ENCODE measurements at regions of chr18 and their contacts with region 1.

Region 1: GRCh38 chr18:3995476-3996102 is 459.5 kb downstream of the DLGAP1 start:
- DNase-seq: peak in 1 of 2 donors; percentile 71
- H3K4me3 ChIP-seq: peak overlapping the region; percentile 23 to 47
- H3K27ac ChIP-seq: no peak overlapping the region
- H3K4me1 ChIP-seq: no peaks in the 10 kb centered on the region
- H3K27me3 ChIP-seq: no peaks in the 10 kb centered on the region
- CTCF ChIP-seq: peak; percentile 43 to 85 (median 82)

Region 2: DNA sequence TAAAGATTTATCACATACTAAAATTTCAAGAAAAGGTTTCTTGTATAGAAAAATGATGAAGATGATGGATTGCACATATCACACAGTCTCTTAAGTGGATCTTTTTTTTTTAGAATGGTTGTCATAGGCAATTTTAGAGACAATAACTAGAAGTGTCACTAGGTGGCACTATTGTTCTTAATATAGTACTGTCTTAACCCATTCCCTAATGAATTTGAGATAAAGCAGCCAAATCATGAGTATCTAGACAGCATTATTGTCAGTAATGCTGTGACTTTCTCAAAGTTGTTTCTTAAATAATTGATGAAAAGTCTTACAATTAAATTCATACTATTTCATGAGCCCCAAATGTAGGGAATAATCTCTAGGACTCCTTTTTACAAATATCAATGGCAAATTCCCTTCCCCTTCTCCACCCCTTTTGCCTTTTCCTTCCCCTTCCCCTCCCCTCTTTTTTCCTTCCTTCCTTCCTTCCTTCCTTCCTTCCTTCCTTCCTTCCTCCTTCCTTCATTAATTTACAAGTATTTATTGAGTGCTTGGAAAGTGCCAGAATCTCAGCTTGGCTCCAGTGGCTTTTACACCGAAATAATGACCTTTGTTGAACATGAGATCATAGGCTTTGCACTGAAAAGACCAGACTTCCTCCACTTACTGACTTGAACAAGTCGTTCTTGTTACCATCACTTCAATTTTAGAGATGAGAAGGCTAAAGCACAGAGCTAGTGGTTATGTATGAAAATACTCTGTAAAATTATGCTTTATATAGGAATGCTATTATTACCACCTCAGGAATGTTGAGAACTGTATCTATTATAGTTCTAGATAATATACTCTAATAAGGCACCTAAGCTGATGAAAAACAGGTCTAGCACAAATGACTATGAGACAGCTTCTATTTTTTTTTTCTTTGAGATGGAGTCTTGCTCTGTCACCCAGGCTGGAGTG is 713.9 kb before region 1 on chr18:
- intact Hi-C with region 1: loop called (anchors 5 kb)
- DNase-seq: no peak
- H3K4me3 ChIP-seq: no peak overlapping the region
- H3K27ac ChIP-seq: no peak overlapping the region
- H3K4me1 ChIP-seq: peaks cover 0 to 3% of the 10 kb centered on the region in 2 donors
- H3K27me3 ChIP-seq: no peaks in the 10 kb centered on the region
- CTCF ChIP-seq: peak; percentile 54 to 71 (median 69)

Region 3: DNA sequence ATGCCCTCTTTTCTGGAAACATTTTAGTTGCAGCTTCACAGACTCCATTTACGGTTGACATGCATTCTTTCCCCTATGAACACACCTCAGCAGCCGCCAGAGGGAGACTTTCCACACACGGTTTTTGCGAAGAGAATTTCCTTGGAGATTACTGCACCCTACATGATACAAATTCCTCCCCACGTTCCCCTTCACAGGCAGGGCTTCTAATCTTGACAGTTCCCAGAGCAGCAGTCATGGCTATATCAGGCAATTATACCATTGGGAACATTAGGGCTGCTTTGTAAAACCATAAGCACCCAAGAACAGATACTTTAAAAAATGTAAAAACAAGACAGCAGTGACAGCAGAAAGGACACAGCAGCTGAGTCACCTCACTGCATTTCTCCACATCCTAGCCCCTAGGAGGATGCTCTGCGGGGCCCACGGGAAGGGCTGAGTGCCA is 291.8 kb before region 1 on chr18:
- intact Hi-C with region 1: loop called (anchors 2 kb)
- DNase-seq: peak in 1 of 2 donors; percentile 79
- H3K4me3 ChIP-seq: peak overlapping the region in 1 of 2 donors; percentile 22
- H3K27ac ChIP-seq: no peak overlapping the region
- H3K4me1 ChIP-seq: peaks cover 0 to 6% of the 10 kb centered on the region in 2 donors
- H3K27me3 ChIP-seq: no peaks in the 10 kb centered on the region
- CTCF ChIP-seq: peak; percentile 21 to 70 (median 64)

Region 4: GRCh38 chr18:3914833-3915610 is 80.6 kb before region 1 on chr18:
- intact Hi-C with region 1: loop called (anchors 5 kb)
- DNase-seq: no peak
- H3K4me3 ChIP-seq: no peak overlapping the region
- H3K27ac ChIP-seq: no peak overlapping the region
- H3K4me1 ChIP-seq: peaks cover 0 to 17% of the 10 kb centered on the region in 2 donors
- H3K27me3 ChIP-seq: no peaks in the 10 kb centered on the region
- CTCF ChIP-seq: no peak

Region 5: GRCh38 chr18:4134700-4135099 is 139.1 kb after region 1 on chr18:
- intact Hi-C with region 1: no loop called
- DNase-seq: no peak
- H3K4me3 ChIP-seq: no peak overlapping the region
- H3K27ac ChIP-seq: no peak overlapping the region
- H3K4me1 ChIP-seq: no peaks in the 10 kb centered on the region
- H3K27me3 ChIP-seq: no peaks in the 10 kb centered on the region
- CTCF ChIP-seq: no peak

Measured in ascending aorta (tissue), 2 donors.